ENCODE measurements at regions of chr1 and their contacts with region 1.

Region 1: GRCh38 chr1:217333939-217334338 is 297.0 kb downstream of the GPATCH2 start:
- DNase-seq: peak; percentile 12
- H3K4me3 ChIP-seq: no peak overlapping the region
- H3K27ac ChIP-seq: no peak overlapping the region
- H3K4me1 ChIP-seq: no peaks in the 10 kb centered on the region
- H3K27me3 ChIP-seq: no peaks in the 10 kb centered on the region
- CTCF ChIP-seq: peak; percentile 60 to 81

Region 2: DNA sequence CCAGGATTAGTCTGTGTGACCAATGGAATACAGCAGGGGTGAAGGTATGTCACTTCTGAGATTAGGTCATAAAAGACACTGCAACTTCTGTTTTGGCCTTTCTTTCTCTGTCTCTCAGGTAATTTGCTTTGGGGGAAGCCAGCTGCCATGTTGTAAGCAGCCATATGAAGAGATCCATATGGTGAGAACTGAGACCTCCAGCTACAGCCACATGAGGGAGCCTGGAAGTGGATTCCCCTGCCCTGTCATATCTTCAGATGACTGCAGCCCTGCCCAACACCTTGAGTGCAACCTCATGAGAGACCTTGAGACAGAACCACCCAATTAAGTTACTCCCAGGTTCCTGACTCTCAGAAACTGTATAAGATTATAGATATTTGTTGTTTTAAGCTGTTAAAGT is 540.6 kb before region 1 on chr1:
- CTCF ChIA-PET with region 1: no interaction called
- dilution Hi-C with region 1: no loop called
- in situ Hi-C with region 1: no loop called
- intact Hi-C with region 1: loop called (anchors 2 kb)
- DNase-seq: no peak
- H3K4me3 ChIP-seq: no peak overlapping the region
- H3K27ac ChIP-seq: no peak overlapping the region
- H3K4me1 ChIP-seq: peaks cover 5% of the 10 kb centered on the region
- H3K27me3 ChIP-seq: no peaks in the 10 kb centered on the region
- CTCF ChIP-seq: peak in 1 of 2 donors; percentile 15

Region 3: GRCh38 chr1:216902669-216903381 is 431.1 kb before region 1 on chr1:
- CTCF ChIA-PET with region 1: no interaction called
- dilution Hi-C with region 1: no loop called
- in situ Hi-C with region 1: no loop called
- intact Hi-C with region 1: loop called (anchors 1 kb)
- DNase-seq: peak; percentile 98
- H3K4me3 ChIP-seq: peak overlapping the region in 2 of 3 experiments; percentile 7 to 10
- H3K27ac ChIP-seq: peak overlapping the region; percentile 98
- H3K4me1 ChIP-seq: peaks cover 63% of the 10 kb centered on the region
- H3K27me3 ChIP-seq: no peaks in the 10 kb centered on the region
- CTCF ChIP-seq: no peak

Region 4: DNA sequence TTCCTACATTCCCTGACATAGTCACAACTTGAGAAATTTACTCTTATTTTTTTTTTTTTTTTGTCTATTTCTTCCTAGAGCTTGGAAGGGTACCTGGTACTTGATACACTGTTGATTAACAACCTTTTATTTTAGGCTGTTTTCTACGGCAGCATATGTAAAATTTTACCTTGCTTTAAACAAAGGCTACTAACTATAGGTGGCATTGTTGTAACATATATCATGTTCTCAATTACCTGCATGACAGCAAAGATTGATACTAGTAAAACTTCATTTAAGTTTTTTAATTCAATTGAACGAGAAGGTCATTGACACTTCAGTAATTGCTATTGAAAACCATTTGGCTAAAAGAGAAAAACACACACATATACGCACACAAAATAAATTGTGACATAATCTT is 372.4 kb before region 1 on chr1:
- CTCF ChIA-PET with region 1: no interaction called
- dilution Hi-C with region 1: no loop called
- in situ Hi-C with region 1: no loop called
- intact Hi-C with region 1: loop called (anchors 1 kb)
- DNase-seq: no peak
- H3K4me3 ChIP-seq: no peak overlapping the region
- H3K27ac ChIP-seq: no peak overlapping the region
- H3K4me1 ChIP-seq: no peaks in the 10 kb centered on the region
- H3K27me3 ChIP-seq: no peaks in the 10 kb centered on the region
- CTCF ChIP-seq: peak in 1 of 2 donors; percentile 24

Region 5: GRCh38 chr1:217029281-217030157 is 304.4 kb before region 1 on chr1:
- CTCF ChIA-PET with region 1: no interaction called
- dilution Hi-C with region 1: no loop called
- in situ Hi-C with region 1: no loop called
- intact Hi-C with region 1: loop called (anchors 10 kb)
- DNase-seq: peak; percentile 95
- H3K4me3 ChIP-seq: peak overlapping the region in 1 of 3 experiments; percentile 26
- H3K27ac ChIP-seq: peak overlapping the region; percentile 72
- H3K4me1 ChIP-seq: peaks cover 15% of the 10 kb centered on the region
- H3K27me3 ChIP-seq: no peaks in the 10 kb centered on the region
- CTCF ChIP-seq: no peak

Region 6: DNA sequence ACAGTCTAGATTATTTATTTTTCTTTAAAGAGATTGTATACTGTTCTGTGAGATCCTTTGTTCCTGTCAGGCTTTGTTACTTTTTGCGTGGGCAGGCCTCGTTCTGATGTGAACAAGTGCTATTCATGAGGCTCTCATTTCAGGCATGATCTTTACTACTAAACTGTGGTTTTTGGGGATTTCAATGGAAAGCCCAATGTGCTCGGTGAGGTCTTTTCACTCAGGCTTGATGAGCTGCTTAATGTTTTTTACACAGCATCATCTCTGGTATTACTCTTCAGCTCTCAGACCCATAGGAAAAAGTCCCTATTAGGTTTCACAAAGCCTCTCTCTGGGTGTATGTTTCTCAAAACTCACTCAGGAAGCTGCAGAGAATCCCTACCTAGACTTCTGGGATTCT is 122.5 kb before region 1 on chr1:
- CTCF ChIA-PET with region 1: no interaction called
- dilution Hi-C with region 1: no loop called
- in situ Hi-C with region 1: no loop called
- intact Hi-C with region 1: no loop called
- DNase-seq: no peak
- H3K4me3 ChIP-seq: no peak overlapping the region
- H3K27ac ChIP-seq: no peak overlapping the region
- H3K4me1 ChIP-seq: no peaks in the 10 kb centered on the region
- H3K27me3 ChIP-seq: no peaks in the 10 kb centered on the region
- CTCF ChIP-seq: no peak

Region 7: GRCh38 chr1:217660353-217661062 is 326.6 kb after region 1 on chr1:
- CTCF ChIA-PET with region 1: no interaction called
- dilution Hi-C with region 1: no loop called
- in situ Hi-C with region 1: no loop called
- intact Hi-C with region 1: loop called (anchors 2 kb)
- DNase-seq: peak; percentile 98
- H3K4me3 ChIP-seq: peak overlapping the region in 2 of 3 experiments; percentile 6 to 14
- H3K27ac ChIP-seq: peak overlapping the region; percentile 79
- H3K4me1 ChIP-seq: peaks cover 20% of the 10 kb centered on the region
- H3K27me3 ChIP-seq: no peaks in the 10 kb centered on the region
- CTCF ChIP-seq: peak; percentile 48 to 62

Region 8: GRCh38 chr1:217747156-217747769 is 413.3 kb after region 1 on chr1:
- CTCF ChIA-PET with region 1: no interaction called
- dilution Hi-C with region 1: no loop called
- in situ Hi-C with region 1: no loop called
- intact Hi-C with region 1: loop called (anchors 10 kb)
- DNase-seq: peak; percentile 14
- H3K4me3 ChIP-seq: no peak overlapping the region
- H3K27ac ChIP-seq: no peak overlapping the region
- H3K4me1 ChIP-seq: no peaks in the 10 kb centered on the region
- H3K27me3 ChIP-seq: no peaks in the 10 kb centered on the region
- CTCF ChIP-seq: peak; percentile 72 to 75